ENCODE measurements at regions of chr22 and their contacts with region 1.

Region 1: DNA sequence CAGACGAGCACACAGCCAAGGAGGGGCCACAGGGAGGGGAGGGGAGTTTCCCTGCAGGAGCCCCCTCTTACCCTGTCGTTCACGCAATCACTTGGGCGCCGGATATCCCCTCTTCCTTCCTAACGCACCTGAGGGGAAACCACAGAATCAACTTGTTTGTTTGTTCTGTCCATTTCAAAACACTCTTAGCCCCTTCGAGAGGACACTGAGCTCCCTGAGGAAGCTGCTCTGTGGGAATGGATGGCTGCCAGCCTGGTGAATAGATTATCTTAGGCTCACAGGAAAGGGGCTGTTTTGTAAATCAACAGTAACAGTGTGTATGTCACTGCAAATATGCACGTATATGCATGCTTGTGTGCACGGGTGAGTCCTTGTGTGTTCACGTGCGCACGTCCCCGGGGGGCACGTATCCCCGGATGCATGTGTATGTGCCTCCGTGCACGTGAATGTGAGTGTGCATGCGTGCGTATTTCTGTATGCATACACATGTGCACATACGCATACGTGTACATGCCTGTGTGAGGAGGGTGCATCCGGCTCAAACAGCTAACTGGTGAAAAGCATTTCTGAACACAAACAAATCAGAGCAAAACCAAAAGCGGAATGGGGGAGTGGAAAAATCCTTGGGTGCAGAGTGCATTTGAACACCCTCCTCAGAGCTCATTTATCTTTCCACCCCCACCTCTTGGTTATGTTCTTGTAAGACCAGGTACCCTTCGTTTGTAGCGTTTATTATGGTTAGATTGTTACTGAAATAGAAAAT is 7.2 kb downstream of the ARSA start:
- DNase-seq: peak; percentile 80 to 88
- ATAC-seq: peak; percentile 74 to 93 (median 86)
- H3K4me3 ChIP-seq: peak overlapping the region in 8 of 10 donors; percentile 23 to 52 (median 39)
- H3K27ac ChIP-seq: peak overlapping the region in 8 of 10 donors; percentile 23 to 84 (median 66)
- H3K4me1 ChIP-seq: peaks cover 2 to 37% (median 31%) of the 10 kb centered on the region in 9 donors
- H3K27me3 ChIP-seq: peaks cover 0 to 8% (median 0%) of the 10 kb centered on the region in 7 donors
- CTCF ChIP-seq: peak in 3 of 9 donors; percentile 2 to 85 (median 14)

Region 2: GRCh38 chr22:50244420-50245213 is 376.2 kb before region 1 on chr22 and contains the start of gene TUBGCP6:
- intact Hi-C with region 1: loop called in 1 of 10 experiments (anchors 5 kb)
- DNase-seq: peak; percentile 95
- ATAC-seq: peak; percentile 90 to 96 (median 94)
- H3K4me3 ChIP-seq: peak within 1 kb of the TSS; percentile 68 to 100 (median 77)
- H3K27ac ChIP-seq: peak within 1 kb of the TSS; percentile 28 to 96 (median 86)
- H3K4me1 ChIP-seq: peaks cover 34 to 65% (median 51%) of the 10 kb centered on the region in 9 donors
- H3K27me3 ChIP-seq: no peaks in the 10 kb centered on the region
- CTCF ChIP-seq: peak in 3 of 9 donors; percentile 40 to 41 (median 40)
- total RNA-seq, gene TUBGCP6: 15.5 to 23.3 (median 18.5) TPM

Region 3: GRCh38 chr22:50530877-50531545 is 89.8 kb before region 1 on chr22:
- intact Hi-C with region 1: loop called in 4 of 10 experiments (anchors 5 kb)
- DNase-seq: peak; percentile 86 to 89
- ATAC-seq: peak; percentile 42 to 58 (median 54)
- H3K4me3 ChIP-seq: peak overlapping the region; percentile 40 to 86 (median 71)
- H3K27ac ChIP-seq: peak overlapping the region; percentile 84 to 99 (median 95)
- H3K4me1 ChIP-seq: peaks cover 9 to 68% (median 50%) of the 10 kb centered on the region in 9 donors
- H3K27me3 ChIP-seq: peaks cover 3 to 54% (median 25%) of the 10 kb centered on the region in 7 donors
- CTCF ChIP-seq: no peak

Region 4: GRCh38 chr22:50576070-50576469 is 44.7 kb before region 1 on chr22:
- intact Hi-C with region 1: loop called in 3 of 10 experiments (anchors 5 kb)
- DNase-seq: no peak
- ATAC-seq: peak in 5 of 8 donors; percentile 17 to 47 (median 32)
- H3K4me3 ChIP-seq: peak overlapping the region in 3 of 10 donors; percentile 57 to 62 (median 59)
- H3K27ac ChIP-seq: peak overlapping the region in 5 of 10 donors; percentile 5 to 100 (median 30)
- H3K4me1 ChIP-seq: peaks cover 5 to 60% (median 38%) of the 10 kb centered on the region in 9 donors
- H3K27me3 ChIP-seq: no peaks in the 10 kb centered on the region
- CTCF ChIP-seq: peak in 7 of 9 donors; percentile 11 to 60 (median 46)

Region 5: GRCh38 chr22:50582562-50583293 is 38.0 kb before region 1 on chr22 and contains the start of gene CHKB:
- intact Hi-C with region 1: loop called in 4 of 10 experiments (anchors 2 to 5 kb)
- DNase-seq: peak; percentile 99
- ATAC-seq: peak; percentile 94 to 98 (median 97)
- H3K4me3 ChIP-seq: peak within 1 kb of the TSS; percentile 58 to 88 (median 78)
- H3K27ac ChIP-seq: peak within 1 kb of the TSS; percentile 96 to 100 (median 97)
- H3K4me1 ChIP-seq: peaks cover 5 to 48% (median 37%) of the 10 kb centered on the region in 9 donors
- H3K27me3 ChIP-seq: no peaks in the 10 kb centered on the region
- CTCF ChIP-seq: peak in 1 of 9 donors; percentile 43
- total RNA-seq, gene CHKB: 31.7 to 60.1 (median 39.9) TPM

Measured in heart right ventricle (tissue), 16 donors.